ENCODE measurements at regions of chr7 and their contacts with region 1.

Region 1: GRCh38 chr7:8044761-8045430 is 76.3 kb downstream of the GLCCI1 start:
- DNase-seq: no peak
- ATAC-seq: no peak
- H3K4me3 ChIP-seq: no peak overlapping the region
- H3K4me3 Mint-ChIP-seq: peak overlapping the region in 1 of 10 donors; percentile 7
- H3K27ac ChIP-seq: no peak overlapping the region
- H3K27ac Mint-ChIP-seq: peak overlapping the region in 2 of 9 donors; percentile 38 to 74
- H3K4me1 ChIP-seq: peaks cover 0 to 5% of the 10 kb centered on the region in 2 donors
- H3K4me1 Mint-ChIP-seq: peaks cover 28 to 68% (median 61%) of the 10 kb centered on the region in 7 donors
- H3K27me3 ChIP-seq: no peaks in the 10 kb centered on the region
- H3K27me3 Mint-ChIP-seq: no peaks in the 10 kb centered on the region

Region 2: GRCh38 chr7:6558837-6559236 is 1486.1 kb before region 1 on chr7:
- CTCF ChIA-PET with region 1: no interaction called
- POLR2A ChIA-PET with region 1: no interaction called
- intact Hi-C with region 1: no loop called
- DNase-seq: peak in 3 of 9 donors; percentile 16 to 27 (median 20)
- ATAC-seq: peak; percentile 47
- H3K4me3 ChIP-seq: no peak overlapping the region
- H3K4me3 Mint-ChIP-seq: no peak overlapping the region
- H3K27ac ChIP-seq: no peak overlapping the region
- H3K27ac Mint-ChIP-seq: no peak overlapping the region
- H3K4me1 ChIP-seq: peaks cover 0 to 11% of the 10 kb centered on the region in 2 donors
- H3K4me1 Mint-ChIP-seq: peaks cover 4 to 13% (median 9%) of the 10 kb centered on the region in 7 donors
- H3K27me3 ChIP-seq: no peaks in the 10 kb centered on the region
- H3K27me3 Mint-ChIP-seq: peaks cover 0 to 4% (median 0%) of the 10 kb centered on the region in 5 donors

Region 3: DNA sequence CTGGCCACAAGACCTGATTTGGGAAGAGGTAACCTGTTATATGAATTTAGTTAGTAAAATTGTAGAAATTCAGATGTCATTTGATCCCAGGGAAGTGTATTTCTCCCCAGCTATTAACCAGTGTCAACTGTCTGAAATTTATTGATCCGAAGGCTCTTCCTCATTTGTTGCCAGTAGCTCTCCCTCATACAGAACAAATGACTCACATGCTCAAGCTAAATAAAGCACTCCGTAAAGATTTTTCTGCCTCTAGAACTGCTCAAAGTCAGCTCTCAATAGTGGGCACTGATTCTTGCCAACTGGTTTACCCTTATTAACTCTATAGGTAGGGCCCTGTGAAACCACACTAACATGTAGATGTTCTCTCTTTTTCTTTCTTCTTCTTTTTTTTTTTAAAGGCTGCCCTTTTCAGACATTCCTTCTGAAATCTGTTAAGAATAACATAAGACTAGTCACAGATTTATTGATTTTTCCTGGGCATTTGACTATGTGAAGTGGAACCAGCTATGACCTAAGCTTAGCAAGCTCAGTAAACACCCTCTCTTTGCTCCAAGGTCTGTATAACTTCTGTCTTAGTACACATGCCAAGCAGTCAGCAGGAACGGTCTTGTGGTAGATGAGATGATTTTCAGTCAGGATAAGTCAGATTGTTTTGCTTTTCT is 348.3 kb before region 1 on chr7:
- CTCF ChIA-PET with region 1: interaction called, 10 read pairs
- POLR2A ChIA-PET with region 1: no interaction called
- intact Hi-C with region 1: no loop called
- DNase-seq: no peak
- ATAC-seq: no peak
- H3K4me3 ChIP-seq: no peak overlapping the region
- H3K4me3 Mint-ChIP-seq: no peak overlapping the region
- H3K27ac ChIP-seq: no peak overlapping the region
- H3K27ac Mint-ChIP-seq: no peak overlapping the region
- H3K4me1 ChIP-seq: peaks cover 3 to 7% of the 10 kb centered on the region in 2 donors
- H3K4me1 Mint-ChIP-seq: peaks cover 6 to 43% (median 24%) of the 10 kb centered on the region in 7 donors
- H3K27me3 ChIP-seq: no peaks in the 10 kb centered on the region
- H3K27me3 Mint-ChIP-seq: no peaks in the 10 kb centered on the region

Region 4: GRCh38 chr7:8176370-8177081 is 131.6 kb after region 1 on chr7:
- CTCF ChIA-PET with region 1: no interaction called
- POLR2A ChIA-PET with region 1: no interaction called
- intact Hi-C with region 1: loop called in 1 of 2 experiments (anchors 1 kb)
- DNase-seq: peak; percentile 20 to 74 (median 70)
- ATAC-seq: peak; percentile 91
- H3K4me3 ChIP-seq: peak overlapping the region; percentile 44
- H3K4me3 Mint-ChIP-seq: peak overlapping the region; percentile 73 to 86 (median 77)
- H3K27ac ChIP-seq: peak overlapping the region; percentile 72
- H3K27ac Mint-ChIP-seq: peak overlapping the region; percentile 88 to 97 (median 96)
- H3K4me1 ChIP-seq: peaks cover 48 to 50% of the 10 kb centered on the region in 2 donors
- H3K4me1 Mint-ChIP-seq: peaks cover 36 to 70% (median 67%) of the 10 kb centered on the region in 7 donors
- H3K27me3 ChIP-seq: no peaks in the 10 kb centered on the region
- H3K27me3 Mint-ChIP-seq: no peaks in the 10 kb centered on the region

Region 5: DNA sequence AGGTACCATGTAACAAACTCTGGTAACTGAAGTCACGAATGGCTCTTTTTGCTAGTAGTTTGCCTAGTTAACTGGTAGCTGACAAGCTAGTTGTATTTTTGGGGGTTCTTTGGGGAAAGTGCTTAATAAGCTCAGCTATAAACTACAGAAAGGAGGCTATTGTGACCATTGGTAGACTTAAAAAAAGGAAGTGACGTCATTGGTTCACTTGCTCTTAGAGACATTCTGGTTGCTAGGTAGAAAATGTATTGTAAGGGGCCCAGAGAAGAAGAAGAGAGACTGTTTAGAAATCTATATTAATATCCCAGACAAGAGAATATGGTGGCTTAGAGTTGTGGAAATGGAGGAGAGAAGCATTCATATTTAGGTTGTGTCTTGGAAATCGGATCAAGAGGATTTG is 491.5 kb after region 1 on chr7:
- CTCF ChIA-PET with region 1: no interaction called
- POLR2A ChIA-PET with region 1: no interaction called
- intact Hi-C with region 1: no loop called
- DNase-seq: no peak
- ATAC-seq: no peak
- H3K4me3 ChIP-seq: no peak overlapping the region
- H3K4me3 Mint-ChIP-seq: no peak overlapping the region
- H3K27ac ChIP-seq: no peak overlapping the region
- H3K27ac Mint-ChIP-seq: no peak overlapping the region
- H3K4me1 ChIP-seq: no peaks in the 10 kb centered on the region
- H3K4me1 Mint-ChIP-seq: no peaks in the 10 kb centered on the region
- H3K27me3 ChIP-seq: no peaks in the 10 kb centered on the region
- H3K27me3 Mint-ChIP-seq: peaks cover 0 to 5% (median 4%) of the 10 kb centered on the region in 5 donors

Measured in naive thymus-derived CD4-positive, alpha-beta T cell (primary cell).